H1 (cell line): ENCODE measurements at regions of chr12 and their contacts with region 1.

Region 1: DNA sequence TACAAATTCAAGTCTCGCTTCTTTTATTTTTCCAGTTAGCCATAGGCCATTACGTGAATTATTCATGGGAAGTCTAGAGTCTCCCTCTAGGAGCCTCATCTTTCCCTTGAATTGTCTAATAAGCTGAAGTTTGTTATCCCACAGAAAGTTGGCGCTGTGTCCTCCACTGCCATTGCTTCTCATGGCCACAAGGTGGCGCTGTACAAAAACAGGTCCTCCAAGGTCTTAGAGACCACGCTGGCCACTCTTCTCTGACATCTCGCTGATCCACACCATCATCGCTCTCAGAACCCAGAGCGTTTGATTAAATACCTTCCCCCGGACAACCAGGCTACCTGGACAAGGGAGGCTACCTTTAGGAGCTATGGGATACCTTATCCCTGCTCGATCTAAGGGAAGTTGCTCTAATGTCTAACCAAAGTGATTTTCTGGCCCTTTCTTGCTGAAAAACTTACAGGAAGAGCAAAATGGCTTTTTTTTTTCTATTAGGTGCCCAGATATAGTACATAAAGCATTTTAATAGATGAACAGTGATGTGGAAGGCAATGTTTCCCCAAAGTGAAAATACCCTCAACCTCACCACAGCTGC is 110.0 kb downstream of the CCDC60 start:
- DNase-seq: peak; percentile 43 to 75
- H3K4me3 ChIP-seq: peak overlapping the region in 1 of 4 experiments; percentile 42; a peak in 2 of 8 replicates
- H3K27ac ChIP-seq: no peak overlapping the region
- H3K4me1 ChIP-seq: peaks cover 0 to 2% (median 0%) of the 10 kb centered on the region in 4 experiments; a peak in 1 of 7 replicates
- H3K27me3 ChIP-seq: no peaks in the 10 kb centered on the region
- CTCF ChIP-seq: peak; percentile 92 to 100 (median 100)
- EP300 ChIP-seq: no peak
- POLR2A ChIP-seq: no peak
- RAD21 ChIP-seq: peak; percentile 81 to 85

Region 2: DNA sequence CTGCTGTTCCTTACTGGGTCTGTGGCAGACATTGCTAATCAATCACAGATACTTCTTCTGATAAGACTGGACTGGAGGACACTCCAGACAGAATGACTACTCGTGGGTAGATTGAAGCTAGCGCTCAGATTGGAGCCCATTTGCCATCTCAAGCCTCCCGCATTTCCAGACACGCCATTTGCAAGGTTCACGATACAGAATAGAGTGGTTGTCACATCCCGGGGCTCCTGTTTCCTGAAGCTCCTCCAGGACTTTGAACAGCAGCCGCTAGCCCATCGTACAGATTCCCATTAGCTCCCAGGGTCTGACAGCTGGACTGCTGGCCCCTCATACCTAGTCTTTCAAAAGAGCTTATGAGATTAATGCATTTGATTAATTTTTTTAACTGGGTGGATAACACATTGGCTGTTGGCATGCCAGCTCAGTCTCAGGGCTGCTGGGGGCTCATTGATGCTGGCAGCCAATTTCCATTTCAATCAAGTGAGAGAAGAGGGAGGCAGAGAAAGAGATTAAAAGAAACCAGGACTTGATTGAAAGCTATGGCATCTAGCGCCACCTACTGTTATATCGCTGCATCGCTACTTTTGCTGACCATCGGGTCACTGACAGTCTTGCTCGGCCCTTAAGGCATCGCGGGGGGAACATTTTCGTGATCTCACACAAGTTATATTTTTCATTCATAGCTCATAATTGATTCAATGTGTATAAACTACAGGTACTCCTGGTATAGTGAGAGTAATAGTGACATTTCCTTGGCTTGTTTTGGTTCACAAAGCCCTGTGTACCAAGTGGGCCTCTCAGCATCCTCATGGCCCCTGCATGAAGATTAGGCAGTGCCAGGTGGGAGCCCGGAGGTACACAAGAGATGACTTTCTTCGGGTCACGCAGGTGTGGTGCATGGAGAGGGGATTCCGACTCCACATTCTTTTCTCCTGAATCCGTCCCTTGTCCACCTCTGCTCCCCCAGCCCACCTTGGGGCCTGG is 31.4 kb before region 1 on chr12:
- CTCF ChIA-PET with region 1: interaction called, 31 read pairs
- POLR2A ChIA-PET with region 1: no interaction called
- DNase-seq: peak; percentile 49 to 91
- H3K4me3 ChIP-seq: peak overlapping the region in 1 of 4 experiments; percentile 34; a peak in 1 of 8 replicates
- H3K27ac ChIP-seq: no peak overlapping the region
- H3K4me1 ChIP-seq: peaks cover 0 to 6% (median 4%) of the 10 kb centered on the region in 4 experiments; a peak in 5 of 7 replicates
- H3K27me3 ChIP-seq: no peaks in the 10 kb centered on the region
- CTCF ChIP-seq: peak; percentile 67 to 94 (median 74)
- EP300 ChIP-seq: no peak
- POLR2A ChIP-seq: no peak
- RAD21 ChIP-seq: peak; percentile 93 to 94

Region 3: GRCh38 chr12:119432949-119433348 is 11.6 kb before region 1 on chr12:
- CTCF ChIA-PET with region 1: interaction called, 38 read pairs
- POLR2A ChIA-PET with region 1: no interaction called
- DNase-seq: no peak
- H3K4me3 ChIP-seq: no peak overlapping the region
- H3K27ac ChIP-seq: no peak overlapping the region
- H3K4me1 ChIP-seq: peaks cover 0 to 2% (median 0%) of the 10 kb centered on the region in 4 experiments; a peak in 2 of 7 replicates
- H3K27me3 ChIP-seq: no peaks in the 10 kb centered on the region
- CTCF ChIP-seq: no peak
- EP300 ChIP-seq: no peak
- POLR2A ChIP-seq: no peak
- RAD21 ChIP-seq: no peak

Region 4: GRCh38 chr12:119468296-119468695 is 23.7 kb after region 1 on chr12:
- CTCF ChIA-PET with region 1: interaction called, 47 read pairs
- POLR2A ChIA-PET with region 1: interaction called, 5 read pairs
- DNase-seq: no peak
- H3K4me3 ChIP-seq: no peak overlapping the region
- H3K27ac ChIP-seq: no peak overlapping the region
- H3K4me1 ChIP-seq: no peaks in the 10 kb centered on the region
- H3K27me3 ChIP-seq: no peaks in the 10 kb centered on the region
- CTCF ChIP-seq: no peak
- EP300 ChIP-seq: no peak
- POLR2A ChIP-seq: no peak
- RAD21 ChIP-seq: no peak

Region 5: GRCh38 chr12:119500209-119500608 is 55.7 kb after region 1 on chr12:
- CTCF ChIA-PET with region 1: interaction called, 11 read pairs
- POLR2A ChIA-PET with region 1: no interaction called
- DNase-seq: no peak
- H3K4me3 ChIP-seq: no peak overlapping the region
- H3K27ac ChIP-seq: no peak overlapping the region
- H3K4me1 ChIP-seq: peaks cover 5 to 11% (median 5%) of the 10 kb centered on the region in 4 experiments; a peak in 5 of 7 replicates
- H3K27me3 ChIP-seq: no peaks in the 10 kb centered on the region; a peak in 1 of 7 replicates
- CTCF ChIP-seq: peak in 2 of 3 experiments; percentile 27 to 34; a peak in 2 of 4 replicates
- EP300 ChIP-seq: no peak
- POLR2A ChIP-seq: no peak
- RAD21 ChIP-seq: peak; percentile 37 to 54; a peak in 3 of 4 replicates

Region 6: GRCh38 chr12:119528241-119528640 is 83.7 kb after region 1 on chr12:
- CTCF ChIA-PET with region 1: interaction called, 15 read pairs
- POLR2A ChIA-PET with region 1: no interaction called
- DNase-seq: no peak
- H3K4me3 ChIP-seq: no peak overlapping the region
- H3K27ac ChIP-seq: no peak overlapping the region
- H3K4me1 ChIP-seq: no peaks in the 10 kb centered on the region
- H3K27me3 ChIP-seq: no peaks in the 10 kb centered on the region
- CTCF ChIP-seq: no peak
- EP300 ChIP-seq: no peak
- POLR2A ChIP-seq: no peak
- RAD21 ChIP-seq: no peak

Region 7: DNA sequence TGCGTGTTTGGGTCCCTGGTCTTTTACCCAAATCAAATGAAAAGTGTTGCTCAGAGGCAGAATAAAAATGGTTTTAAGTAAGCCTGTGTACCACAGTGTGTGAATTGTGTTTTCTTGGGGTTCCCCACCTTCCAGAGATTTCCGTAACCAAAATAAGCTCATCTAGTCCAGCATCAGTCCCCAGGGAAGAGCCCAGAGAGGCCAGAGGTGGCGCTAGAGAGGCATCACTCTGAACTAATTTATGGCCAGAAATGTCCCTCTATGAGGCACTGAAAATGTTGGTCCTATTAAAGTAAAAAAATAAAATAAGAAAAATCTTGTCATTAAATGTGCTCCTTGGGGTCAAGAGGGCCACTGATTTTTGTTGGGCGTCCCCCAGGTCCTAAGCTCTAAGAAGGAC is 198.4 kb after region 1 on chr12:
- CTCF ChIA-PET with region 1: interaction called, 11 read pairs
- POLR2A ChIA-PET with region 1: no interaction called
- DNase-seq: peak in 1 of 2 experiments; percentile 76
- H3K4me3 ChIP-seq: no peak overlapping the region
- H3K27ac ChIP-seq: no peak overlapping the region
- H3K4me1 ChIP-seq: no peaks in the 10 kb centered on the region
- H3K27me3 ChIP-seq: no peaks in the 10 kb centered on the region
- CTCF ChIP-seq: peak; percentile 60 to 71 (median 67)
- EP300 ChIP-seq: no peak
- POLR2A ChIP-seq: no peak
- RAD21 ChIP-seq: peak; percentile 14 to 35; a peak in 3 of 4 replicates